BJ (cell line): ENCODE measurements at regions of chr16 and their contacts with region 1.

Region 1: GRCh38 chr16:85675251-85675927 is 13.4 kb downstream of the GINS2 start:
- DNase-seq: no peak
- H3K4me3 ChIP-seq: no peak overlapping the region
- H3K27me3 ChIP-seq: no peaks in the 10 kb centered on the region
- CTCF ChIP-seq: peak; percentile 48

Region 2: DNA sequence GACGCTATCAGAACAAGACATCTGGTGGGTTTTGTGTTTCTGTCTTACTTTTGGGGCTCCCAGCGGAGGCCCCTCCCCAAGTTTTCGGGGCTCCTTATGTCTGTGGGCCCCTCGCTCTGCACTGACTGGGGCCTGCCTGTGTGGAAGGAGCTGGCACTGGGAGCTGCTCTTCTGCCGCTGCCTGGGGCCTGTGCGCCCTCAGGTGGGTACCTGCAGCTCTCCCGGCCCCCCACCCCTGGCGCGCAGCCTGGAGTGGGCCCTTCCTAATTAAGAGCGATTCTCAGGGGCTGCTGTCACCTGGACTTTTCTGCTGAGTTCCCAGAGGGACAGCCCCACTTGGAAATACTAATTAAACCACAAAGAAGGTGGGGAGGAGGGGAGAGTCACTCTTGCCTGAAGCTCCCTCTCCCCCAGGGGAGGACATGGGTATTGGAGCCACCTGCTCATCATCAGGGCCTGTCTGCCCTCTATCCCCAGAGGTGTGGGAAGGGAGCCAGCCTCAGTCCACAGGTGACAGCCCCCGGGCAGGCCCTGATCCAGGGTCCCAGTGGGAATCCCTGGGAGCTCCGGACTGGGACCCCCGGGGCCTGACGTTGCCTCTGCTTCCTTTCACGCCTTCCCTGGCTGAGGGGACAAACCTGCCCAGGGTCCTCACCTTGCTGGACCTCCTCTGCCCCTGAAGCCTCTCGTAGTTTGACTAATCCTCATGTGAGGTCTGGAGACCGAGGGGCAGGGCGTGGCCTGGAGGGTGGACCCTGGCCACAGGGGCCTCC is 25.8 kb before region 1 on chr16:
- CTCF ChIA-PET with region 1: no interaction called
- POLR2A ChIA-PET with region 1: no interaction called
- DNase-seq: no peak
- H3K4me3 ChIP-seq: no peak overlapping the region
- H3K27me3 ChIP-seq: no peaks in the 10 kb centered on the region
- CTCF ChIP-seq: no peak

Region 3: GRCh38 chr16:85659805-85660495 is 15.4 kb before region 1 on chr16:
- CTCF ChIA-PET with region 1: interaction called, 17 read pairs
- POLR2A ChIA-PET with region 1: no interaction called
- DNase-seq: no peak
- H3K4me3 ChIP-seq: no peak overlapping the region
- H3K27me3 ChIP-seq: no peaks in the 10 kb centered on the region
- CTCF ChIP-seq: peak; percentile 93